HepG2 (cell line): ENCODE measurements at regions of chr12 and their contacts with region 1.

Region 1: DNA sequence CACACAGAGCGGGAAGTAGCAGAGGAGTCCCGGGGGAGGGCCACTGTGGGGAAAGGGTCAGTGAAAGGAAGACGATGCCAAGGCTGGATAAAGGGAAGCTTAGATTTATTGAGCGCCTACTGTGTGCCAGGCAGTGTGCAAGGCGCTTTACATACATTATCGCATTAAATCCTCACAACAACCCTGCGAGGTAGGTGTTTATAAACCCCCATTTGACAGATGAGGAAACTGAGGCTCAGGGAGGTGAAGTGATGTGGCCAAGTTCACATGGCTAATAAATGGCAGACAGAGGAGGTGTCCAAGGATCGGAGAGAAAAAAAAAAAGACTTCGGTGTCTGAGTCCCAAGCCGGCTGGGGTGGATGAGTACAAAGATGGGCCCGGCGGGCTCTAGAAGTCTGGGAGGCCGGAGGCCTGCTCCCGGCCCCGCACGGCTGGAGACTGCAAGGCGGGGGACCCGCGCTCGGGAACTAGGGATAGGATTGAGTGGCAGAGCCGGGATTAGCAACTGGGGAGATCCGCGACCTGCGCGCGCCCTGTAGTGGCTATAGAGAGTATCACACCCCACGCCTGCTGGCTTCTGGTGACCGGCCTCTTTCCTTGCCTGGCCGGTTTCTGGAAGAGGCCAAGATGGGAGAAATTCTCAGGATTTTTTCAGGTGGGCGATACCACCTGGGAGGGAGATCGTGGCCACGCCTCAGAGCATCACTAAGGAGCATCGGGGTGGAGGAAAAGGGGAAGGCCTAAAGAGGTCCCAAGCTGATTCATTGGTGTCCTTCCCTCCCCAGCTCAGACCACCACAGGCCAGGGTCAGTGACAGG is 3.9 kb downstream of the DDN start:
- DNase-seq: peak; percentile 67
- ATAC-seq: peak; percentile 69
- H3K4me3 ChIP-seq: peak overlapping the region in 1 of 3 experiments; percentile 37; a peak in 1 of 6 replicates
- H3K27ac ChIP-seq: no peak overlapping the region
- H3K4me1 ChIP-seq: peaks cover 60% of the 10 kb centered on the region
- H3K27me3 ChIP-seq: peaks cover 10 to 52% of the 10 kb centered on the region in 2 experiments; a peak in 4 of 5 replicates
- CTCF ChIP-seq: peak; percentile 86
- EP300 ChIP-seq: no peak
- POLR2A ChIP-seq: no peak
- RAD21 ChIP-seq: peak; percentile 69

Region 2: DNA sequence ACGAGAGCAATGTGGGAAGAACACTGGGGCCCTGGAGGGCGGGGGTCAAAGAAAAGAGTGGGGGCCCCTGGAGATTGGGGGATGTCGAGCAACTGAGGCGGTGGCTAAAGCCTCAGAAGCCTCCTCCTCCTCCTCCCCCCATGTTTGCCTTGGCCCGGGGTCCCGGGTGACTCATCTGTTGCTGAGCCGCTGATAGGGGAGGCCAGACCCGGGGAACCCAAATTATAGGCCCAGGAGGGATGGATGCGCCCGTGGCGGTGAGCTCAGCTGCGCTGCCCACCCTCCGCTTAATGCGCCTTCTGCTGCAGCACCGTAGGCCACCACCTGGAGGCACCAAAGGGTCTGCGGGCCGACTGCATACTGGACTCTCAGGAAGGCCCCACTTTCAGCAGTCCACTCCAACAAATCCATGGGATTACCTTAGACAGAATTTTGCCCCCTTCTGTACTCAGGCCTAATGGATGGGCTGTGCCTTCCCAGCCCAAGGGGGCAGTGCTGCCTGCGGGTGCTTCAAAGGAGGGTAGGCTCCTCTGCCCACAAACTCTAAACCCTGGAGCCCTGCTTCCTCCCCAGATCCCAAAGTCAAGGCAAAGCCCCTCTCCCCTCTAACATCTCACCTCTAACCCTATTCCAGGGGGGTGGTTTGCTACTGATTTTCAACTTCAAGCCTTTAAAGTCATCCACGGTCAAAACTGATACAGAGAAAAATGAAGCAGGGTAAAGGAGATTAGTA is 21.2 kb before region 1 on chr12:
- CTCF ChIA-PET with region 1: interaction called, 11 read pairs
- POLR2A ChIA-PET with region 1: no interaction called
- in situ Hi-C with region 1: no loop called
- intact Hi-C with region 1: no loop called
- DNase-seq: no peak
- ATAC-seq: peak; percentile 64
- H3K4me3 ChIP-seq: no peak overlapping the region
- H3K27ac ChIP-seq: no peak overlapping the region
- H3K4me1 ChIP-seq: peaks cover 73% of the 10 kb centered on the region
- H3K27me3 ChIP-seq: peaks cover 27 to 79% of the 10 kb centered on the region in 2 experiments
- CTCF ChIP-seq: peak; percentile 79
- EP300 ChIP-seq: no peak
- POLR2A ChIP-seq: no peak
- RAD21 ChIP-seq: peak; percentile 47

Region 3: GRCh38 chr12:49010092-49010668 is 14.9 kb after region 1 on chr12:
- CTCF ChIA-PET with region 1: interaction called, 6 read pairs
- POLR2A ChIA-PET with region 1: interaction called, 13 read pairs
- in situ Hi-C with region 1: no loop called
- intact Hi-C with region 1: no loop called
- DNase-seq: no peak
- ATAC-seq: no peak
- H3K4me3 ChIP-seq: no peak overlapping the region
- H3K27ac ChIP-seq: no peak overlapping the region
- H3K4me1 ChIP-seq: peaks cover 21% of the 10 kb centered on the region
- H3K27me3 ChIP-seq: no peaks in the 10 kb centered on the region
- CTCF ChIP-seq: no peak
- EP300 ChIP-seq: no peak
- POLR2A ChIP-seq: no peak
- RAD21 ChIP-seq: no peak

Region 4: DNA sequence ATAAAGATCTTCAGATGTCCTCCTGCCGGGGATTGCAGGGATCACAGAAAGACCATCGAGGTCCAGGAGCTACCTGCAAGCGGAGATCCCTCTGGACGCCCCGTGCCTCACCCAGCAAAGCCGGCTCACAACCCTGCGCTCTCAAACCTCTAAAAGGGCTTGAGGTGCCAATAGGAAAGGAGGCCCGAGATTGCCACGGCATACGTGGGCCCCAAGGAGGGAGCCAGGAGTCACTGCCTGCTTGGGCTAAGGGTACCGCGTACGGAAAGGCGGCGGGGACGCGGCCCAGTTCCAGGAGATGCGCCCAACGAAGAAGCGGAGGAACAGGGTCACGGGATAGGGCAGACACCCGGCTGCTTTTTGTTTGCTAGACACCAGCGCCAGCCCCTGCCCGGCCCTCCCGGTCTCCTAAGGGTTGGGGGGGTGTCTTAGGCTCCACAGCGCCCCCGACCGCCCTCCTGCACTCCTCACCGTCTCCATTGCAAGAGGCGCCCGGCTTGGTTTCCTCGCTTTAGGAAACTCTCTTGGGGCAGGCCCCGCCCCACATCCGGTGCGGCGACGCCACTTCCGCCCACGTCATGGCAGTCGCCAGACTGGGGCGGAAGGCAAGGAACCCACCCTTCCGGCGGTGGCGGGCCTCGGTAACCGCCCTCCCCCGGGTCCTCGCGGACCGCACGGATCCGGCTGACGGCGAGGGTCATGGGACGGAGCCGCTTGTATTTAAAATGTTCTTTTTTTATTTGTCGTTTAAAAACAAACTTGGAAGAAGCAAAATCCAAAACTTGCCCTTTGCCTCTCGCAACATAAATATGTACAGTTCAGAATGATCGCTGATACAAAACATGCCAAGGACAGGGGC is 23.2 kb after region 1 on chr12 and contains the start of gene PRKAG1:
- CTCF ChIA-PET with region 1: interaction called, 15 read pairs
- POLR2A ChIA-PET with region 1: interaction called, 9 read pairs
- in situ Hi-C with region 1: no loop called
- intact Hi-C with region 1: loop called (anchors 1 kb)
- DNase-seq: peak; percentile 91
- ATAC-seq: peak; percentile 89
- H3K4me3 ChIP-seq: peak within 1 kb of the TSS; percentile 74 to 93 (median 85)
- H3K27ac ChIP-seq: peak within 1 kb of the TSS; percentile 86
- H3K4me1 ChIP-seq: peaks cover 20% of the 10 kb centered on the region
- H3K27me3 ChIP-seq: no peaks in the 10 kb centered on the region
- CTCF ChIP-seq: peak; percentile 83
- EP300 ChIP-seq: peak in 1 of 2 experiments; percentile 24; a peak in 1 of 4 replicates
- POLR2A ChIP-seq: peak; percentile 78 to 82
- RAD21 ChIP-seq: peak; percentile 25; the same call in 1 of the 2 replicates
- total RNA-seq, gene PRKAG1: 32.8 and 37.6 TPM in 2 replicates

Region 5: GRCh38 chr12:49567611-49568441 is 572.6 kb after region 1 on chr12 and contains the start of gene MCRS1:
- CTCF ChIA-PET with region 1: no interaction called
- POLR2A ChIA-PET with region 1: no interaction called
- in situ Hi-C with region 1: no loop called
- intact Hi-C with region 1: loop called (anchors 5 kb)
- DNase-seq: peak; percentile 92
- ATAC-seq: peak; percentile 87
- H3K4me3 ChIP-seq: peak within 1 kb of the TSS; percentile 80 to 98 (median 85)
- H3K27ac ChIP-seq: peak within 1 kb of the TSS; percentile 81
- H3K4me1 ChIP-seq: peaks cover 34% of the 10 kb centered on the region
- H3K27me3 ChIP-seq: no peaks in the 10 kb centered on the region; a peak in 1 of 5 replicates
- CTCF ChIP-seq: 0 out of 2 replicates have a peak, but pooled peaks have one; percentile 10
- EP300 ChIP-seq: no peak
- POLR2A ChIP-seq: peak; percentile 70 to 96
- RAD21 ChIP-seq: no peak
- total RNA-seq, gene MCRS1: 66.3 and 76.8 TPM in 2 replicates